ENCODE measurements at regions of chr2 and their contacts with region 1.

Region 1: DNA sequence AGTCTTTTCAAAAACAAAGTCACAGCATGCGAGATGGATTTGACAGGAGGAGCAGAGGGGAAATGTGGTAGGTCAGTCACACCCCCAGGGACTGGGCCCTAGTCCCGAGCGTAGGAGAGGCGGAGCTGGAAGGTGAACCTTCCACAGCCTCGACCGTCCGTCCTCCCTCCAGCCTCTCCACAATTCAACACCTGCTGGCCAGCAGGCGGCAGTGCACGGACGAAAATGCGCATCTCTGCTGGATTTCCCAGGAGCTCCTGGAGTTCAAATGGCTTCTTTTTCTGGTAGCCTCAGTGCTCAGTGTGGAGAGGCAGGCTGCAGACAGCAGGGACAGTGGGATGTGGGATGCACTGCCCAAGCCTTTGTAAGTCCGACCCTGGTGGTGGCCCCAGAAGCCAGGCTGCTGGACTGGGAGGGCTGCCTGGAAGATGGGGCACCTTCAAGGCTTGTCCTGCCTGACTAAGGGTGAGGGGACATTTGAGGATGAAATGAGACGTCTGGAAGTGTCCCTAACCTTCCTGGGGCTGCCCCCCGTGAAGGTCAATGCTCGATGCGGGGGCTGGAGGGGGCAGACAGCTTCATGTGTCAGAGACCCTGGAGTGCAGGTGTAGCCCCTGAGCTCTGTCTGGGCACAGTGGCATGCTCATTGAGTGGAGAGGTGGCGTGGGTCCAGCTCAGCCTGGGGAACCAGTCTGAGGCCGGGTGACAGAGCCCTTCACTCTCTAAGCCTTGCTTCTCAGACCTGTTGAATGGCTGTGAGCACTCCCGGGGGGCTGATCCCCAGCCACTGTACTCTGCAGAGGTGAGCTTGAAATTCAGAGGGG is 189.5 kb downstream of the TFCP2L1 start:
- DNase-seq: no peak
- ATAC-seq: peak; percentile 93
- H3K4me3 ChIP-seq: no peak overlapping the region
- H3K27ac ChIP-seq: no peak overlapping the region
- H3K4me1 ChIP-seq: 0 out of 2 replicates have a peak, but pooled peaks cover 4% of the 10 kb centered on the region
- H3K27me3 ChIP-seq: no peaks in the 10 kb centered on the region
- CTCF ChIP-seq: peak; percentile 95

Region 2: GRCh38 chr2:121329786-121330185 is 234.3 kb after region 1 on chr2:
- CTCF ChIA-PET with region 1: interaction called, 3 read pairs
- POLR2A ChIA-PET with region 1: no interaction called
- in situ Hi-C with region 1: no loop called
- intact Hi-C with region 1: loop called (anchors 10 kb)
- DNase-seq: no peak
- ATAC-seq: no peak
- H3K4me3 ChIP-seq: no peak overlapping the region
- H3K27ac ChIP-seq: no peak overlapping the region
- H3K4me1 ChIP-seq: no peaks in the 10 kb centered on the region
- H3K27me3 ChIP-seq: no peaks in the 10 kb centered on the region
- CTCF ChIP-seq: no peak

Region 3: DNA sequence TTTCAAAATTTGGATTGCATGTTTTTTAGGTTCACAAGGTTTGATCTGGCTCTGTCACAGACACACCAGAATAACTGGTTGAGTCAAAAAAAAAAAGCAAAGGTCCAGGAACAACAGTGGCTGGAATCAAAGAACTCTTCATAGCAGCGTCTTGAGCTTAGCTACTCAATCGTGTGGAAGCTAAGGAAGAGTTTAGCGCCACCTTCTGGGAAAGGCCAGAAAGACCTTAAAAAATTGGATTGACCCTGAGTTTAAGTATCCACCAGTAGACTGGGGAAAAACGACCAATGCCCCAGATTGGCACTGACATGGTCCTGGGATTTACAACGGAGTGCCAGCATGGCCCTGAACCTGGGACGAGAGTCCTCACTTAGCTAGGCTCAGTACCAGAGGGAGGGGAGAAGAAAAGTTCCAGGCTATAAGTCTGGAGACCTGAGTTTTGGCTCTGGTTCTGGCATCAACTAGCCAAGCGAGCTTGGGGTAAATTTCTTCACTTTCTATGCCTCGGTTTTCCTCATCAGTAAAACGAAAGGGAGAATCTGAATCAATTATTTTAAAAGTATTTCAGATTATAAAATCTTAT is 260.7 kb after region 1 on chr2:
- CTCF ChIA-PET with region 1: interaction called, 30 read pairs
- POLR2A ChIA-PET with region 1: no interaction called
- in situ Hi-C with region 1: no loop called
- intact Hi-C with region 1: loop called (anchors 10 kb)
- DNase-seq: peak; percentile 35
- ATAC-seq: peak; percentile 76
- H3K4me3 ChIP-seq: no peak overlapping the region
- H3K27ac ChIP-seq: no peak overlapping the region
- H3K4me1 ChIP-seq: peaks cover 13% of the 10 kb centered on the region
- H3K27me3 ChIP-seq: no peaks in the 10 kb centered on the region
- CTCF ChIP-seq: peak; percentile 87

Region 4: GRCh38 chr2:121530212-121530705 is 434.8 kb after region 1 on chr2:
- CTCF ChIA-PET with region 1: interaction called, 10 read pairs
- POLR2A ChIA-PET with region 1: no interaction called
- in situ Hi-C with region 1: no loop called
- intact Hi-C with region 1: no loop called
- DNase-seq: peak; percentile 22
- ATAC-seq: peak; percentile 86
- H3K4me3 ChIP-seq: peak overlapping the region; percentile 79 to 80
- H3K27ac ChIP-seq: peak overlapping the region; percentile 96
- H3K4me1 ChIP-seq: peaks cover 32% of the 10 kb centered on the region
- H3K27me3 ChIP-seq: no peaks in the 10 kb centered on the region
- CTCF ChIP-seq: no peak